ENCODE measurements at regions of chr2 and their contacts with region 1.

Region 1: DNA sequence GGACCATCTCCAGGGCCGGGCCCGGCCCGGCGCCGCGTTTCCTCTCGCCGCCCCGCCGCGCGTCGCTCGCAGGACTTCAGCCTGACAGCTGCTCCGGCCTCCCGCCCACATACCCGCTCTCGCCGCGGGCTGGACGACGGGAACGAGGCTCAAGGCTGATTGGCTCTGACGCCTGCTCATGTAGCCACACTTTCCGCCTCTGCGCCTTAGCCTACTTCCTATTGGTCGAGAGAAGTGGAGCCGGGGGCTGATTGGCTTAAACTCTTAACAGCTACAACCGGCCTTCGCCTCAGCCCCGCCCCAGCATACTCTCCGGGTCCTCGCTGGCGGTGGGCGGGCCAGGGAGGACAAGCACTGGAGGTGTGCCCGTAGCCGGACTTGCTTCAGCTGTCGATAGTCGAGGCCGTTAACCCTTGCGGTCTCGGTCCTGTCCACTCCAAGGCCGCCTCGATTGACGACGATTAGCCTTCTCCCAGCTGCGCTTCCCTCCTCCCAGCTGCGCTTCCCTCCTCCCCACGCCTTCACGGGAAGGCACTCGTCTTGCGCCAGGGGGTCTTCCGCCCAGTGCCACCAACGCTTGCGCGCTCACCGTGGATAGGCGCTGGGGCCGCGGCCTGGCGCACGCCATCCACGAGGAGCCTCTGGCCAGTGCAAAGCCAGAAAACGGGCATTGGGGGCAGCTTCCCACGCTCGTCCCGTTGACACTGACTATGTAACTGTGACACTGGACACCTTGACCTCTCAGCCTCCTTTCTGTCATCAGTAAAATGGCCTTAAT is at the start of gene PRADC1:
- DNase-seq: peak; percentile 96
- H3K4me3 Mint-ChIP-seq: peak within 1 kb of the TSS; percentile 95
- H3K27ac Mint-ChIP-seq: peak within 1 kb of the TSS; percentile 96
- H3K4me1 Mint-ChIP-seq: peaks cover 28% of the 10 kb centered on the region
- H3K27me3 Mint-ChIP-seq: no peaks in the 10 kb centered on the region
- total RNA-seq, gene PRADC1: 16.6 and 18.6 TPM in 2 replicates

Region 2: GRCh38 chr2:73112913-73113633 is 120.3 kb before region 1 on chr2 and contains the start of gene RAB11FIP5:
- intact Hi-C with region 1: loop called (anchors 1 kb)
- DNase-seq: peak; percentile 81
- H3K4me3 Mint-ChIP-seq: peak within 1 kb of the TSS; percentile 84
- H3K27ac Mint-ChIP-seq: peak within 1 kb of the TSS; percentile 46
- H3K4me1 Mint-ChIP-seq: peaks cover 25% of the 10 kb centered on the region
- H3K27me3 Mint-ChIP-seq: peaks cover 14% of the 10 kb centered on the region
- total RNA-seq, gene RAB11FIP5: 12.1 and 12.9 TPM in 2 replicates

Region 3: GRCh38 chr2:73212448-73213176 is 20.7 kb before region 1 on chr2:
- intact Hi-C with region 1: loop called (anchors 1 kb)
- DNase-seq: peak; percentile 55
- H3K4me3 Mint-ChIP-seq: no peak overlapping the region
- H3K27ac Mint-ChIP-seq: no peak overlapping the region
- H3K4me1 Mint-ChIP-seq: peaks cover 31% of the 10 kb centered on the region
- H3K27me3 Mint-ChIP-seq: peaks cover 3% of the 10 kb centered on the region

Region 4: DNA sequence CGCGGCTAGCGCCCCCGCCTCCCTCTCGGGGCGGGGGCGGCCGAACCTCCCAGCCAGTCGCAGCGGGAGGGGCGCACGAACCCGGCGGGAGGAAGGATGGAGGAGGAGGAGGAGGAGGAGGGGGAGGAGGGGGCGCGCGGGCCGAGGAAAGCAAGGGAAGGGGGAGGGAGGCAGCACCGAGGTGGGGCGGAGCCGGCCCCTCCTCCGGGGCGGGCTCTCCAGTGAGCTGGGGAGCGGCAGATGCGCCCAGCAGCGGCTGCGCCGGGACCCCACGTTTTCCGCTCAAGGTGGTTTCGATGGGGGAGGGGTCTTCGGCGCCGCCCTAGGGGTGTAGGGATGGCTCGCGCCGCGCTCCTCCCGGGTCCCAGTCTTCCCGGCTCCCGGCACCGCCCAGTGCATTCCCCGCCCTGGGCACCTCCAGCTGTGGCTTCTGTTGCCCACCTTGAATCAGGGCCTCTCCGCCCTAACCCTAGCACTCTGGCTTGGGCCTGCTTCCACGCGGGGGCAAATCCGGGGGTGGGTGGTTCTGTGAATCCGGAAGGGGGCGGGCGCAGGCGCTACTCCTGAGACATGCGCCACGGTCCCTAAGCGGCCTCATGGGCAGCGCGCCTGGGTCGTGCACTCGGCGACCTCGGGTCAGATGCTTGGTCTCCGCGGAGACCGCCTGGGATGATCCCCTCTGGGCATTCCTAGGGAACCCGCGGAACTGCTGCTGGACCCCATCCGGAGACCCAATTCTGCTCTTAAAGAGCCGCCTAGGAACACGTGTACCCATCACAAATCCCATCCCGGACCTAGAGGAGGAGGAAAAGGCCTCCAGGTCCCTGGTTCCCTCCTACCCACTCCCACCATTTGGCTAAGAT is 51.2 kb after region 1 on chr2 and contains the start of gene FBXO41:
- intact Hi-C with region 1: loop called (anchors 1 kb)
- DNase-seq: peak; percentile 68
- H3K4me3 Mint-ChIP-seq: peak within 1 kb of the TSS; percentile 84
- H3K27ac Mint-ChIP-seq: peak within 1 kb of the TSS; percentile 57
- H3K4me1 Mint-ChIP-seq: peaks cover 18% of the 10 kb centered on the region
- H3K27me3 Mint-ChIP-seq: peaks cover 15% of the 10 kb centered on the region
- total RNA-seq, gene FBXO41: 29.3 and 30.9 TPM in 2 replicates

Region 5: DNA sequence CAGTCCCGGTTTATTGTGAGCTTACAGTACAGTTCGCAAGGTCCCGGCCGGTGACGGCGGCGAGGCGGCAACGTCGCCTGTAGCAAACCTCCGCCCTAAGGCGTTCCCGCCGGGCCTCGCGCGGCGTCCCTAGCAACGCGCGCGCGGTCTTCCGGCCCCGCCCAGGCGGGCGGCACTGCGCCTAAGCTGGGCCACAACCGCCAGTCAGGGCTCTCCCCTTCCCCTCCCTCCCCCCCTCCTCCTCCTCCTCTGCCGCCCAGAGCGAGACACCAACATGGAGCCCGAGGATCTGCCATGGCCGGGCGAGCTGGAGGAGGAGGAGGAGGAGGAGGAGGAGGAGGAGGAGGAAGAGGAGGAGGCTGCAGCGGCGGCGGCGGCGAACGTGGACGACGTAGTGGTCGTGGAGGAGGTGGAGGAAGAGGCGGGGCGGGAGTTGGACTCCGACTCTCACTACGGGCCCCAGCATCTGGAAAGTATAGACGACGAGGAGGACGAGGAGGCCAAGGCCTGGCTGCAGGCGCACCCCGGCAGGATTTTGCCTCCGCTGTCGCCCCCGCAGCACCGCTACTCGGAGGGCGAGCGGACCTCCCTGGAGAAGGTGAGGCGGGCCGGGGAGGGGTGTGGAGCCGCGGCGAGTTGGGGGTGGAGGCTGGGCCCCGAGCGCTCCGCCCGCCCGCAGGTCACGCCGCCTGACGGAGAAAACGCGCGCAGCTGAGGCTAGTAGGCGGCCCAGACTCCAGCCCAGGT is 152.4 kb after region 1 on chr2 and contains the start of gene ALMS1:
- intact Hi-C with region 1: loop called (anchors 1 kb)
- DNase-seq: peak; percentile 88
- H3K4me3 Mint-ChIP-seq: peak within 1 kb of the TSS; percentile 92
- H3K27ac Mint-ChIP-seq: peak within 1 kb of the TSS; percentile 90
- H3K4me1 Mint-ChIP-seq: peaks cover 37% of the 10 kb centered on the region
- H3K27me3 Mint-ChIP-seq: no peaks in the 10 kb centered on the region
- total RNA-seq, gene ALMS1: 18.2 and 19.4 TPM in 2 replicates

Region 6: DNA sequence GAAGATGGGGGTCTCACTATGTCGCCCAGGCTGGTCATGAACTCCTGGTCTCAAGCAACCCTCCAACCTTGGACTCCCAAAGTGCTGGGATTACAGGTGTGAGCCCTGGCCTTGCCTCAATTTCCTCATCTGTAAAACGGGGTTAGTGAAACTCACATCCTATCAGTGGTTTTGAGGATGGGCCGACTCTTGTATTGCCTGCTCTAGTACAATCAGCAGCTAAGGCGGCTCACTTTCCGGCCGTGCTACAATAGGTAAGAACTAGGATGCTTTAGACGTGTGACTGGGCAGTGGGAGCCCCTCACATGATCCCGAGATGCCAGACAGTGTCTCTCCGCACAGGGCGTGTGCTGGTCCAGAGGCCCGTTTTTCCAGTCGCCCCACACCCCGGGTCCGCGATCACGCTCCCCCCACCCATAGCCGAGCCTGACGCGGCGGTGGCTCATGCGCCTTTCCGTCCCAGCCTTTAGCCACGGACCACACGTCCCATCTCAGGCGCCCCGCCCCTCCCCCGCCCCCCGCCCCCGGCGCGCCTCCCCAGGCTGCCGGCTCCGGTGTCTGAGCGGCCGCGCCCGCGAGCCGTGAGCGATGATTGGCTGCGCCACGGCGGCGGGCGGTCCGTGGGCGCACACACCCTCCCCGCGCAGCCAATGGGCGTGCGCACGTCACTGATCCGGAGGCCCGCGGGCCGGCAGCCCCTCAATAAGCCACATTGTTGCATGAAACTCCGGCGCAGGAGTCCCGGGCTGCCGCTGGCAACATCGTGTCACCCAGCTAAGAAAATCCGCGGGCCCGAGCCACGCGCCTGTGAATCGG is 1600.3 kb after region 1 on chr2 and contains the start of gene HK2:
- intact Hi-C with region 1: loop called (anchors 10 kb)
- DNase-seq: peak; percentile 85
- H3K4me3 Mint-ChIP-seq: peak within 1 kb of the TSS; percentile 96
- H3K27ac Mint-ChIP-seq: peak within 1 kb of the TSS; percentile 96
- H3K4me1 Mint-ChIP-seq: peaks cover 58% of the 10 kb centered on the region
- H3K27me3 Mint-ChIP-seq: peaks cover 3% of the 10 kb centered on the region
- total RNA-seq, gene HK2: 92.2 and 94.5 TPM in 2 replicates